ENCODE measurements at regions of chr13 and their contacts with region 1.

Region 1: DNA sequence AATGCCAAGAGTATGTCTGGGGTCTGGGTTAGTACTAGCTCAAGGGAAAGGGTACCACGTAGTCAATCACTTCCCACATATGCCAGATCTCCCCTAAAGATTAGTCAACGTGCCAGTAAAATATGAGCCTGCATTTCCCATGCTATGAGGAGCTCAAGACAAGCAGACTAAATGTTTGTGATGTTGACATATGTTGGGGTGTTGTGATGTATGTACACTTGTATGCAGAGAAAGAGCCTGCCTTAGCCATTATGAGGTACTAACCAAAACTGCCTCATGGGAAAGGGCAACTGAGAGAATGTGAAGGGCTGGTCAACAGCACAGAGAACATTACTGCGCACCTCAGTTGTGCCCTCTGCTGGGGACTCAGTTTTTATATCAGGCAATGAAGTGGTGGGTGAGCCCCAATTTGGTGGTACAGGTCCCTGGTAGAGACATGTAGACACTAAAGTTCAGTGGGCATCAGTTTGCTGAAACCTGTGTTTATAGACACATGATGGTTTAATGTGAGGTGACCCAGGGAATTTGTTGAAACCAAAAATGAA is 287.0 kb downstream of the DCT start:
- DNase-seq: peak; percentile 80
- H3K4me3 ChIP-seq: no peak overlapping the region
- H3K27ac ChIP-seq: peak overlapping the region; percentile 54
- H3K4me1 ChIP-seq: peaks cover 49% of the 10 kb centered on the region
- H3K27me3 ChIP-seq: no peaks in the 10 kb centered on the region
- CTCF ChIP-seq: peak; percentile 74

Region 2: DNA sequence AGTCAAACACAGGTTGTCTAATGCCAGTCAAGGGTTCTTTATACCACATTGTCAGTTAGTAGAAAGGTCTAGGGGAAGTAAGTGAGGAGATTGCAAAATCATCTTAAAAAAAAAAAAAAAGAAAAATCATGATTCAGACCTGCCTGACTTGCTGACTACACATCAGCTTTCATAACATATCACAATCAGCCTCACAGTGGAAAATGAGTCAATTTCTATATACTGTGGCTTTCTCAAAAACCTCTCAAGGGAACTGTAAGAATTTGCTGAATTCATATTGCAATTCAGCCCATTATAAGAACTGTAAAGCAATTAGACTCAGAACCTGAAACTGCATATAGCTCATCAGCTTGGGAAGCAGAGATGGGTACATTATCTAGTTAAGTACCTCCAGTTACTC is 1041.2 kb before region 1 on chr13:
- CTCF ChIA-PET with region 1: no interaction called
- POLR2A ChIA-PET with region 1: no interaction called
- intact Hi-C with region 1: no loop called
- DNase-seq: peak; percentile 5
- H3K4me3 ChIP-seq: no peak overlapping the region
- H3K27ac ChIP-seq: no peak overlapping the region
- H3K4me1 ChIP-seq: no peaks in the 10 kb centered on the region
- H3K27me3 ChIP-seq: no peaks in the 10 kb centered on the region
- CTCF ChIP-seq: no peak

Region 3: GRCh38 chr13:93248627-93249047 is 943.9 kb before region 1 on chr13:
- CTCF ChIA-PET with region 1: no interaction called
- POLR2A ChIA-PET with region 1: no interaction called
- intact Hi-C with region 1: loop called (anchors 10 kb)
- DNase-seq: peak; percentile 92
- H3K4me3 ChIP-seq: no peak overlapping the region
- H3K27ac ChIP-seq: peak overlapping the region; percentile 77
- H3K4me1 ChIP-seq: peaks cover 67% of the 10 kb centered on the region
- H3K27me3 ChIP-seq: no peaks in the 10 kb centered on the region
- CTCF ChIP-seq: peak; percentile 81

Region 4: DNA sequence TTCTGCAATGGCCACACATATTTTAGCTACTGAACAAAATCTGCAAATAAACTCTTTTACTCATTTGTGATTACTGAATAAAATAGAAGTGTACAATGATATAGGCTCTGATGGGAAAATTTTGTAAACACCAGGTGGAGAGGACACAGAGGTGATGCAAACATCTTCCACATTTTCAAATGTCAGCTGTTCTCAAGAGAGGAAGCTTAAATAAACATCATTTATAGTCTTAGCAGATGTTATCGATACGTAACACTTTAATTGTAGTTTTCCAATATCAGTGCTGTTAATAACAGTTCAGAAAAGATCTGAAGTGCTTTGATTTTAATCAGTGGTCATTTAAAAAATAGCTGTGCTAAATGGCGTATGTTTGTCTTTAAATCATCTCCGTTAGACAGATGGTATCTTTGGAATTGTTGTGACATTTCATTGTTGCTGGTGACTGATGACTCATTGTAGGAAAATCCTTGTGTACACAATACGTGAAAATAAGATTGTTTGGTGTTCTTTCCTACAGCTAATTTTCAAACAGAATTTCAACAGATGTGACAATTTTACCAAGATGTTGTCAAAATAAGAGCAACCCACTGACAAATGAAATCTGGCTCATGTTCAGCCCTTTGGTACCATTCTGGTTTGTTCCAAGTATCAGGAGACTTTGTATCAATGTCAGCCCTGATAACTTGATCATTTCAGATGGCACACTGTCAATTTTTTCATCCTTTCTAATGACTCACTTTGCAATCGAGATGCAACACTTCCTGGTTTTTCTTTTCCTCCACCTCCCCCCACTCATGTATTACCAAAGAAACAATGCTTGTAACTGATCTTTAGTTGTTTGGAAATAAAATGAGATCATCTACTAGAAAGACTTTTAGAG is 229.0 kb before region 1 on chr13:
- CTCF ChIA-PET with region 1: no interaction called
- POLR2A ChIA-PET with region 1: no interaction called
- intact Hi-C with region 1: loop called (anchors 10 kb)
- DNase-seq: peak; percentile 56
- H3K4me3 ChIP-seq: no peak overlapping the region
- H3K27ac ChIP-seq: no peak overlapping the region
- H3K4me1 ChIP-seq: peaks cover 28% of the 10 kb centered on the region
- H3K27me3 ChIP-seq: no peaks in the 10 kb centered on the region
- CTCF ChIP-seq: no peak

Region 5: GRCh38 chr13:94345374-94346195 is 153.1 kb after region 1 on chr13:
- CTCF ChIA-PET with region 1: interaction called, 4 read pairs
- POLR2A ChIA-PET with region 1: no interaction called
- intact Hi-C with region 1: loop called (anchors 2 kb)
- DNase-seq: peak; percentile 87
- H3K4me3 ChIP-seq: no peak overlapping the region
- H3K27ac ChIP-seq: peak overlapping the region; percentile 20
- H3K4me1 ChIP-seq: peaks cover 33% of the 10 kb centered on the region
- H3K27me3 ChIP-seq: no peaks in the 10 kb centered on the region
- CTCF ChIP-seq: peak; percentile 51

Measured in A673 (cell line).